ENCODE measurements at regions of chr22 and their contacts with region 1.

Region 1: DNA sequence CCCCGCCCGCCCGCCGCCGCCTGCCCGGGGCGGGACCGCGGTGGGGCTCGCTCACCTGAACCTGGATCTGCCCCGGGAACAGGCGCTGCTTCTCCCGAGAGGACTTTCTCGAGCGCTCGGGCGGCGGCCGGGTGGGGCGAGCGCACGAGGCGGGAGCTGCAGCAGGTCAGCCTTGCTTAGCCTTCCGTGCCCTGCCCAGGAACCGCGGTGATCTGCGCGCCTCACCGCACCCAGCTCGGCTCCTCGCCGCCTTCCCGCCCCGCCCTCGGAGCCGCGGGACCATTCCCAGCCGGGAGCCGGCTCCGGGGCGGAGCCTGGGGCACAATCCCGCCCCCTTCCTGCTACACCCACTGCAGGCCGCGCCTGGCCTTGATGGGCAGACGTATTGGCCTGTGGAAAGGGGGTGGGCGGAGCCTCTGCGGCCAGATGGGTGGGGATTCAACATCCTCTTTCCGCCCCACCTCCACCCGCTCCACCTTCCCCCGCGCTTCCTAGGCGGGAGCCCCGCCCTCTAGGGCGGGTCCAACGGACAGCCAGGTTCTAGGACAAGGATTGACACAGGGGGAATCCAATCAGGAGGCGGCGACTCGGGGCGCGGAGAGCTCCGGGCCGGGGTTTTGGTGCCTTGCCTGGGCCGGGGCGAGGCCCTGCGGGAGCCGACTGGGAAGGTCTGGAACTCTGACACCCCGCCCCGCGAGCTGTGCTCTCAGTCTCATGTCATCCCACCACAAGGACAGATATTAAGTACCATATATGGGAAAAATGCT is at the start of gene MYH9:
- DNase-seq: peak; percentile 100
- ATAC-seq: peak; percentile 86
- H3K4me3 Mint-ChIP-seq: peak within 1 kb of the TSS; percentile 88
- H3K27ac Mint-ChIP-seq: peak within 1 kb of the TSS; percentile 92
- H3K4me1 Mint-ChIP-seq: peaks cover 38% of the 10 kb centered on the region
- H3K27me3 Mint-ChIP-seq: no peaks in the 10 kb centered on the region
- total RNA-seq, gene MYH9: 695 to 913 TPM

Region 2: GRCh38 chr22:36369922-36370791 is 17.8 kb before region 1 on chr22:
- CTCF ChIA-PET with region 1: interaction called, 33 read pairs
- DNase-seq: no peak
- ATAC-seq: peak; percentile 40
- H3K4me3 Mint-ChIP-seq: peak overlapping the region; percentile 68
- H3K27ac Mint-ChIP-seq: peak overlapping the region; percentile 84
- H3K4me1 Mint-ChIP-seq: peaks cover 96% of the 10 kb centered on the region
- H3K27me3 Mint-ChIP-seq: no peaks in the 10 kb centered on the region